ENCODE measurements at regions of chr12 and their contacts with region 1.

Region 1: DNA sequence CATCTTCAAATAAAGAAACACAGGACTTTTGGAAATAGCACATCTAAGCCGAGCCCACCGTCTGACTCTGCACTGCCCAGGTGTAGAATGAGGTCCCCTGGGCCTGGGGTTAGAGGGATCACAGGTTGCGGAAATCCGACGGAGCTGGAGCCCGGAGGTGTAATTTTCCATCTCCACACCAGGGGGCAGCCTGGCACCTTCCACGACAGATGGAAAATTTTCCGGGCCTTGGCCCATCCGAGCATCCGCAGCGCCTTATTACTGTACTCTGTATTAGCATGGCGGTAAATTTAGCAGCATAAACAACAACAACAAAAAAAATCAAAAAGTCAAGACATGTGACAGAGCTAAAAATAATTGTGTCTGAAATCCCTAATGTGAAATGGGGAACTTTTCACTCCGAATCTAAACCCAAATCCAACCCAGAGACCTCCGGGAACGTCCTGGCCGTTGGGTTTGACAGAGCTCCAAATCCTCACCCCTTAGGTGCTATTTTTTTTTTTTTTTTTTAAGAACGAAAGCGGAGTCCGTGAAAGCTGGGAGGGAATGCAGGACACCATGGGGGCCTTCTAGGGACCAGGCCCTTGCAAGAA is 93.9 kb downstream of the KSR2 start:
- DNase-seq: peak; percentile 70 to 85 (median 85)
- ATAC-seq: peak; percentile 63 to 87
- H3K4me3 ChIP-seq: no peak overlapping the region
- H3K27ac ChIP-seq: no peak overlapping the region
- H3K4me1 ChIP-seq: no peaks in the 10 kb centered on the region
- H3K27me3 ChIP-seq: peaks cover 2% of the 10 kb centered on the region

Region 2: DNA sequence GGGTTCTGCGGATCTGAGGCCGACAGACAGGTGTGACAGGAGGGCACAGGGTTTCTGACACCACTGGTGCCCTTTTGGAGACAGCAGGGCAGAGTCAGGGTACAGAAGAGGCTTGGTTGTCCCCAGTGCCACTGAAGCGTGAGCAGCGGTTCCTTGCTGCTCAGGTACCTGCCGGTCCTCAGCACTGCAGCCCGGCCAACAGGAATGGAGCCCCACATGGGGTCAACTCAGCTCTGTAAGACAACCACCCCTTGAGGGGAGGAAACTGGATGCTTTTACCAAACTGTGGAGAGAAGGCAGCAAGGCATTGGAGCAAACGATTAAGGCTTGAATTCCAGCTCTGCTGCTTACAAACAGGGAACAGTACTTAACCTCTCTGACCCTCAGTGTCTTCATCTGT is 267.2 kb before region 1 on chr12:
- intact Hi-C with region 1: no loop called
- DNase-seq: no peak
- ATAC-seq: no peak
- H3K4me3 ChIP-seq: no peak overlapping the region
- H3K27ac ChIP-seq: no peak overlapping the region
- H3K4me1 ChIP-seq: no peaks in the 10 kb centered on the region
- H3K27me3 ChIP-seq: peaks cover 3% of the 10 kb centered on the region

Region 3: DNA sequence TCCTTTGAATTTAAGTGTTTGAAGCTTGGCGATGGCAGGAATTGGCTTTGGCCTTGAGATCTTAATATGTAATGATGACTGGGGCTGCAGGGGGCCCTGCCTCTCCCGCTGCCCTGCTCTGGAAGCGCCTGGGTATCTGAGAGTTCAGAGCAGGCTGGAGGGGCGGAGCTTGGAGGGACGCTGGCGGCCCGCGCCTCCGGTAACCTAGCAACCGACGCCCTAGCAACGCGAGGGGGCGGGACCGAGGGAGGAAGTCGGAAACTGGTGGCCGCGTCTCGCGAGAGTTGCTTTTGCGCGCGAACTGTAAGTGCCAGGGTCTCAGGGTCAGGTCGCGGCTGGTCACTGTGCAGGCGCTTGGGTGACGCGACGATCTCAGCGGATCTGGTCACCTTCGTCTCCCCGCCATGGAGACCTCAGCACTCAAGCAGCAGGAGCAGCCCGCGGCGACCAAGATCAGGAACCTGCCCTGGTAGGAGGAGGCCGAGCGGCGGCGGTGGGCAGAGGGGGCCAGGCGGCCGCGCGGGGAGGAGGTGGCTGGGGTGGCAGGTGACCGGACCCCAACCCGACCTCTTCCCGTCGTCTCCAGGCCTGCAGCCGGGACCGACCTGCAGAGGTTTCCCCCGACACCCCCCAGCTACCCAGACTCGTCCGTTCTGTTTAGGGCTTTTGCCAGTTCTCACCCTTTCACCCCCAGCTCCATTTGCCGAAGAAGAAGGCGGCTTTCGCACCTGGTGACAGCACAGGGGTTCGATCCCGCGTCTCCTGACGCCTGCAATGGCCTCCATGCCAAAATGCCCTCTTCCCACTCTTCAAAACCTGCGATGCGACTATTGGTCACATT is 141.7 kb after region 1 on chr12 and contains the start of gene RFC5:
- intact Hi-C with region 1: loop called in 1 of 4 experiments (anchors 10 kb)
- DNase-seq: peak; percentile 99 to 100 (median 99)
- ATAC-seq: peak; percentile 100
- H3K4me3 ChIP-seq: peak within 1 kb of the TSS; percentile 61
- H3K27ac ChIP-seq: no peak within 1 kb of the TSS
- H3K4me1 ChIP-seq: no peaks in the 10 kb centered on the region
- H3K27me3 ChIP-seq: no peaks in the 10 kb centered on the region
- total RNA-seq, gene RFC5: 4.3 to 7.9 (median 6.4) TPM

Region 4: DNA sequence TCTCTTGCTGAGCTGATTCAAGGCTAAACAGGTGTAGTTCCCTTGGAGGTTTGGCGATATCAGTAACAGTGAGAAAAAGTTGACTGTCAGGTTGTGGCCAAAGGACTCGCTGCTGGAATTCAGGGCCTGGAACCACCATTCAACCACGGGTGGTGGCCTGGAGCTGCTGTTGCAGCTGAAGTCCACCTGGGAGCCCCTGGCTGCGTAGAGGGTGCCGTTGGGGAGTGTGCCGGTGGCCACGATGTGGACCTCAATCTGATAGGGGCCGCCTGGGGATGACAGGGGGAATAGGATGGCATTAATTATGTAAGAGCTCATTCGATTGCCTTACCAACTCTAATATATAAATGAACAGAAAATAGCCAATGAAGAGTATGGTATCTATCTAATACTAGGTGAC is 207.2 kb after region 1 on chr12:
- intact Hi-C with region 1: no loop called
- DNase-seq: no peak
- ATAC-seq: no peak
- H3K4me3 ChIP-seq: no peak overlapping the region
- H3K27ac ChIP-seq: no peak overlapping the region
- H3K4me1 ChIP-seq: no peaks in the 10 kb centered on the region
- H3K27me3 ChIP-seq: no peaks in the 10 kb centered on the region

Region 5: DNA sequence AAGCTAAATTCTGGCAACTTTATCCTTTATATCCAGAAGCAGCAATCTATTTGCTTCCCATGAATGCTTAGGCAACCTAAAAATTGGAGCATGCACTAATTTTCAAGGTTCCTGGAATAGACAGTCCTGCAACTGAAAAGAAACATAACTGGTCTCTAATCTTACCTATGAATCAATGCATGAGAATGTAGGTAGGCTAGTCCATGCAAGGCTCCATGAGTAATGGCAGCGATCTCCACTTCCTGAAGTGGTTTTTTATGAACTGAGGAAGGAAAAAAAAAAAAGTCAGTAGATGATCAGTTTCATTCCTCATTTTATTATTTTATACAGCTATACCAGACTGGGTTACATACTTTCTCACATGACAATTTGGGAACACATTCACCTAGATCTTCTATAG is 363.0 kb after region 1 on chr12:
- intact Hi-C with region 1: no loop called
- DNase-seq: no peak
- ATAC-seq: no peak
- H3K4me3 ChIP-seq: no peak overlapping the region
- H3K27ac ChIP-seq: no peak overlapping the region
- H3K4me1 ChIP-seq: no peaks in the 10 kb centered on the region
- H3K27me3 ChIP-seq: no peaks in the 10 kb centered on the region

Region 6: DNA sequence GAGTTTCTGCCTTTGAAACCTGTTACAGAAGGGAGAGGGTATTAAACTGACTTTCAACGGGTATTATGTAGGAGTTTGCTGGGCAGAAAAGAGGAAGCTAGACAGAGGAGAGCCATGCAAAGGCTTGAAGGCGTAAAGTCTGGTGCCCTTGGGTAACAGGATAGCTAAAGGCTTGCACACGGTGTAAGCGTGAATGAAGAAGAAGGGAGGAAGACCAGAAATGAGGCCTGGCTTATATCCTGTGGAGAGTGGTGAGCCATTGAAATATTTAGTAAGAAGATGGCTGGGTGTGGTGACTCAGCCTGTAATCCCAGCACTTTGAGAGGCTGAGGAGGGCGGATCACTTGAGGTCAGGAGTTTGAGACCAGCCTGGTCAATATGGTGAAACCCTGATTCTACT is 524.0 kb after region 1 on chr12:
- intact Hi-C with region 1: loop called in 1 of 4 experiments (anchors 10 kb)
- DNase-seq: no peak
- ATAC-seq: no peak
- H3K4me3 ChIP-seq: no peak overlapping the region
- H3K27ac ChIP-seq: no peak overlapping the region
- H3K4me1 ChIP-seq: peaks cover 3% of the 10 kb centered on the region
- H3K27me3 ChIP-seq: no peaks in the 10 kb centered on the region

Measured in right cardiac atrium (tissue), 5 donors.